H1 (cell line): ENCODE measurements at regions of chr12 and their contacts with region 1.

Region 1: DNA sequence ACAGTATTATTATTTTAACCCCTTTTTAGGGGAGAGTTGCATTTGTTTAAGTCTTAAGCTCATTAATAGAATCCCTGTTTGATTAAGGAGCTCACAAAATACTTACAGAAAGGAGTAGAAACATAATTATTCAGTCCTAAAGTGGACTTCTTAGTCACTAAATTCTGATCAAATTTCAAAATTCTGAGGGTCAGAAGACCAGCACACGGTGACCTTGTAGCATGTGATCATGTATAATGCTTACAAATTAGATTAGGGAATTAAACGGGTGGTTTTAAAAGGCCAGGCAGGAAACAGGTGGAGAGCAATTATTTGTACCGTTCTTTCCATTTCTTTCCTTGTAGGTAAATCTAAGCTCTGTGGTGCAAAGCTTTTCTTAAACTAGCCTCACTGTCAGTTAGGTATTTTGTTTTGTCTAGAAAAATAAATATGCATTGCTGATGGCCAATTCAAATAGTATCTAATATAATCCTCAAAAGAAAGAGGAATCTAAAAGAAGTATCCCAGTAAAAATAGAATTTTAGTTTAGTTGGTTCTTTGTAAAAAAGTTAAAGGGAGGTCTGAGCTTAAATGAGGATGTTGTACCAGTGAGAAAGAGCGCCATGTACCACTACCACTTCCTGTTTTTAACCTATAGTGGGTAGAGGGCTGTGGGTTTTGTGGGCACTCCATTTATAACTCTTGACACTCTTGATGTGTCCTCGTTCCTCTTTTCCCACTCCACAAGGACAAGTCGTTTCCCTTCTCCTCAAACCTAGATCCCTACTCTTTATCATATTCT is 51.1 kb downstream of the SLC38A1 start:
- DNase-seq: no peak
- H3K4me3 ChIP-seq: no peak overlapping the region
- H3K27ac ChIP-seq: no peak overlapping the region
- H3K4me1 ChIP-seq: peaks cover 0 to 22% (median 7%) of the 10 kb centered on the region in 4 experiments; a peak in 4 of 7 replicates
- H3K27me3 ChIP-seq: no peaks in the 10 kb centered on the region
- CTCF ChIP-seq: no peak
- EP300 ChIP-seq: no peak
- POLR2A ChIP-seq: no peak
- RAD21 ChIP-seq: no peak

Region 2: GRCh38 chr12:46185686-46186085 is 32.0 kb before region 1 on chr12:
- CTCF ChIA-PET with region 1: no interaction called
- POLR2A ChIA-PET with region 1: no interaction called
- DNase-seq: no peak
- H3K4me3 ChIP-seq: no peak overlapping the region
- H3K27ac ChIP-seq: no peak overlapping the region
- H3K4me1 ChIP-seq: no peaks in the 10 kb centered on the region; a peak in 1 of 7 replicates
- H3K27me3 ChIP-seq: no peaks in the 10 kb centered on the region
- CTCF ChIP-seq: no peak
- EP300 ChIP-seq: no peak
- POLR2A ChIP-seq: no peak; a peak in 1 of 3 replicates
- RAD21 ChIP-seq: no peak

Region 3: GRCh38 chr12:46198913-46199312 is 18.8 kb before region 1 on chr12:
- CTCF ChIA-PET with region 1: interaction called, 5 read pairs
- POLR2A ChIA-PET with region 1: interaction called, 10 read pairs
- DNase-seq: no peak
- H3K4me3 ChIP-seq: no peak overlapping the region
- H3K27ac ChIP-seq: no peak overlapping the region
- H3K4me1 ChIP-seq: no peaks in the 10 kb centered on the region
- H3K27me3 ChIP-seq: no peaks in the 10 kb centered on the region
- CTCF ChIP-seq: no peak
- EP300 ChIP-seq: no peak
- POLR2A ChIP-seq: no peak
- RAD21 ChIP-seq: no peak

Region 4: DNA sequence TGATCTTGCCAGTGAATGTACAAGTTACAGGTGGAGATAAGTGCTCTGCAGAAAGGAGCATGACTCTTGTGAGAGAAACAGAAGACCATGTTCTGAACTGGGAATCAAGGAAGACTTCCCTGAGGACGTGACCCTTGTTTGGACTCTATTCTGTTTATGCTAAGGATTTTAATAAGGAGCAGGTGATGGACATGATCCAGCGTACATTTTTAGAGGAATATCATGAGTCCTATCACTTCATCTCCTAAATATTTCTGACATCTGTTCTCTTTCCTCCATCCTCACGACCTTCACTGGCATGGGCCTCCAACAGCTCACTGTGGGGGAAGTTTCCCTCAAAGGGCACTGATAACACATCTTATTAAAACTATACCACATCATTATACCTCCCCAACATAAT is 59.0 kb after region 1 on chr12:
- CTCF ChIA-PET with region 1: no interaction called
- POLR2A ChIA-PET with region 1: no interaction called
- DNase-seq: no peak
- H3K4me3 ChIP-seq: no peak overlapping the region
- H3K27ac ChIP-seq: no peak overlapping the region
- H3K4me1 ChIP-seq: no peaks in the 10 kb centered on the region; a peak in 1 of 7 replicates
- H3K27me3 ChIP-seq: no peaks in the 10 kb centered on the region
- CTCF ChIP-seq: no peak
- EP300 ChIP-seq: no peak
- POLR2A ChIP-seq: no peak
- RAD21 ChIP-seq: no peak